Activated CD4-positive, alpha-beta T cell treated with anti-CD3 and anti-CD28 coated beads for 36 hours (primary cell): ENCODE measurements at regions of chr5 and their contacts with region 1.

Region 1: DNA sequence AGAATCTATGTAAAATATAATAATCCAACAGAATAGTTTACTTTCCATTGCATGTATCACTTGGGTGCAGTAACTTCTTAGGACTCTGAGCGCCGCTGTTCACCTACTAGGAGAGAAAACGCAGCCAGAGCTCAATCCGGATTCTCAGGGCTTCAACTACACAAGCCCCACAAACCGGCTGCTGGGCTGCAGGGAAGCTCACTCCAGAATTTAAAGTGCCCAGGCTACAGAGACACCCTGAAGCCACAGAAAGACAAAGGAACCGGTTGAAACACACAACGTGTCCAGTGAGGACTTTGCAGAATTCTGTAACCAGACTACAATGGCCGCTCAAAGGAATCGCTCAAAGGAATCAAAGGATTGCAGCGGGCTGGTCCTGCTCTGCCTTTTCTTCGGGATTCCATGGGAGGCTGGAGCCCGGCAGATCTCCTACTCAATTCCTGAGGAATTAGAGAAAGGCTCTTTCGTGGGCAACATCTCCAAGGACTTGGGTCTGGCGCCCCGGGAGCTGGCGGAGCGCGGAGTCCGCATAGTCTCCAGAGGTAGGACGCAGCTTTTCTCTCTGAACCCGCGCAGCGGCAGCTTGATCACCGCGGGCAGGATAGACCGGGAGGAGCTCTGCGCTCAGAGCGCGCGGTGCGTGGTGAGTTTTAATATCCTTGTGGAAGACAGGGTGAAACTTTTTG is at the start of gene PCDHGA10:
- DNase-seq: peak; percentile 74
- ATAC-seq: peak; percentile 76
- H3K4me3 Mint-ChIP-seq: peak within 1 kb of the TSS; percentile 62
- H3K27ac Mint-ChIP-seq: no peak within 1 kb of the TSS
- H3K4me1 Mint-ChIP-seq: peaks cover 10% of the 10 kb centered on the region
- H3K27me3 Mint-ChIP-seq: peaks cover 63% of the 10 kb centered on the region
- total RNA-seq, gene PCDHGA10: 0.07 TPM in 1 of 2 experiments, not detected in the other

Region 2: DNA sequence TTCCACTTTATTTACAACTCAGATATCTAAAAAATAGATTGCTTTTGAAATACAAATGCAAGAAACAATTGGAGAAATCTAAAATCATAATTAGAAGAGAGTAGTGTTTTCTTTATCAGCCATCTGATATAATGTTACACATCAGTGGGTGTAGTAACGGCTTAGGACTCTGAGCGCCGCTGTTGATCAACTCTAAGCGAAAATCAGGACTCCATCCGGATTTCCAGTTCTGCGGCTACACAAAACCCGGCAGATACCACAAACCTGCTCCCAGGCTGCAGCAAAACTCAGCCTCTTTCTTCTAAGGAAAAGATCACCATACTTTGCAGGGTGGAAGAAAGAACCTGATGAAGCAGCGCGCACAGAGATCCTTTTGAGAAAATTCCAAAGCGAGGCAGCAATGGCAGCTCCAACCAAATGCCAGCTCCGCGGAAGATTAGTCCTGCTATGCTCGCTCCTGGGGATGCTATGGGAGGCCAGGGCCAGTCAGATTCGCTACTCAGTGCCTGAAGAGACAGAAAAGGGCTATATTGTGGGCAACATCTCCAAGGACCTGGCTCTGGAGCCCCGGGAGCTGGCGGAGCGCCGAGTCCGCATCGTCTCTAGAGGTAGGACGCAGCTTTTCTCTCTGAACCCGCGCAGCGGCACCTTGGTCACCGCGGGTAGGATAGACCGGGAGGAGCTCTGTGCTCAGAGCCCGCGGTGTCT is 10.3 kb before region 1 on chr5 and contains the start of gene PCDHGA9:
- CTCF ChIA-PET with region 1: interaction called, 15 read pairs
- POLR2A ChIA-PET with region 1: no interaction called
- intact Hi-C with region 1: no loop called
- DNase-seq: peak; percentile 46
- ATAC-seq: no peak
- H3K4me3 Mint-ChIP-seq: no peak within 1 kb of the TSS
- H3K27ac Mint-ChIP-seq: no peak within 1 kb of the TSS
- H3K4me1 Mint-ChIP-seq: no peaks in the 10 kb centered on the region
- H3K27me3 Mint-ChIP-seq: peaks cover 56% of the 10 kb centered on the region
- total RNA-seq, gene PCDHGA9: 0.09 TPM in 1 of 2 experiments, not detected in the other

Region 3: DNA sequence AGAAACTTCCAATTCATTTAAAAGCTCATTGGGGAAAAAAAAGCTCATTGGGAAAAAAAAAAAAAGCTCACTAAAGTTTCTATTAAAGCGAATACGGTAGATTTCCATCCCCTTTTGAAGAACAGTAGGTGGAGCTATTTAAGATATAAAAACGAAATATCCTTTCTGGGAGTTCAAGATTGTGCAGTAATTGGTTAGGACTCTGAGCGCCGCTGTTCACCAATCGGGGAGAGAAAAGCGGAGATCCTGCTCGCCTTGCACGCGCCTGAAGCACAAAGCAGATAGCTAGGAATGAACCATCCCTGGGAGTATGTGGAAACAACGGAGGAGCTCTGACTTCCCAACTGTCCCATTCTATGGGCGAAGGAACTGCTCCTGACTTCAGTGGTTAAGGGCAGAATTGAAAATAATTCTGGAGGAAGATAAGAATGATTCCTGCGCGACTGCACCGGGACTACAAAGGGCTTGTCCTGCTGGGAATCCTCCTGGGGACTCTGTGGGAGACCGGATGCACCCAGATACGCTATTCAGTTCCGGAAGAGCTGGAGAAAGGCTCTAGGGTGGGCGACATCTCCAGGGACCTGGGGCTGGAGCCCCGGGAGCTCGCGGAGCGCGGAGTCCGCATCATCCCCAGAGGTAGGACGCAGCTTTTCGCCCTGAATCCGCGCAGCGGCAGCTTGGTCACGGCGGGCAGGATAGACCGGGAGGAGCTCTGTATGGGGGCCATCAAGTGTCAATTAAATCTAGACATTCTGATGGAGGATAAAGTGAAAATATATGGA is 17.5 kb after region 1 on chr5 and contains the start of gene PCDHGA12:
- CTCF ChIA-PET with region 1: interaction called, 23 read pairs
- POLR2A ChIA-PET with region 1: no interaction called
- intact Hi-C with region 1: no loop called
- DNase-seq: peak; percentile 68
- ATAC-seq: peak; percentile 73
- H3K4me3 Mint-ChIP-seq: peak within 1 kb of the TSS; percentile 45
- H3K27ac Mint-ChIP-seq: no peak within 1 kb of the TSS
- H3K4me1 Mint-ChIP-seq: peaks cover 17% of the 10 kb centered on the region
- H3K27me3 Mint-ChIP-seq: peaks cover 69% of the 10 kb centered on the region
- total RNA-seq, gene PCDHGA12: 0.07 to 0.09 TPM